HCT116 (cell line): ENCODE measurements at regions of chr1 and their contacts with region 1.

Region 1: GRCh38 chr1:20493839-20494608 is 8.0 kb upstream of the CAMK2N1 start:
- DNase-seq: peak; percentile 84
- ATAC-seq: peak; percentile 48
- H3K4me3 ChIP-seq: peak overlapping the region in 1 of 2 experiments; percentile 37; a peak in 1 of 4 replicates
- H3K27ac ChIP-seq: peak overlapping the region; percentile 94
- H3K4me1 ChIP-seq: peaks cover 30 to 57% of the 10 kb centered on the region in 2 experiments
- H3K27me3 ChIP-seq: no peaks in the 10 kb centered on the region
- CTCF ChIP-seq: peak in 2 of 3 experiments; percentile 98 to 99; a peak in 4 of 6 replicates
- POLR2A ChIP-seq: no peak
- RAD21 ChIP-seq: no peak

Region 2: DNA sequence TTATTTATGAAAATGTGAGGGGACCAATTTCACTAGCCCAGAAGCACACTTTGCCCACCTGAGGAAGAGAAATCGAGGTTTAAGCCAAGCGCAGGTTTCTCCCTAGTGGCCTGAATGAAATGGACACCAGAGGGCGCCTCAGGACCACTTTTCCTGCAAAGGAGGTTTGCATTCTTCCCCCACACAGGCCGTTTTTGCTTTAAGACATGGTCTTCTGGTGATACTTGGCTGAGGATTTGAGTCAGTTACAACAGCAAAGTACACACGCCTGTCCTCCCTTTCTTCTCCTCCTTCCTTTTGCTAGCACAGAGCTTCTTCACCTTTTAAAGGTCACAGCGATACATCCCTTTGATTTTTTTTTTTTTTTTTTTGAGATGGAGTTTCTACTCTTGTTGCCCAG is 576.0 kb before region 1 on chr1:
- CTCF ChIA-PET with region 1: interaction called, 4 read pairs
- POLR2A ChIA-PET with region 1: no interaction called
- RAD21 ChIA-PET with region 1: no interaction called
- intact Hi-C with region 1: loop called (anchors 2 kb)
- DNase-seq: peak; percentile 75
- ATAC-seq: peak; percentile 80
- H3K4me3 ChIP-seq: no peak overlapping the region
- H3K27ac ChIP-seq: no peak overlapping the region
- H3K4me1 ChIP-seq: peaks cover 0 to 13% of the 10 kb centered on the region in 2 experiments; a peak in 2 of 4 replicates
- H3K27me3 ChIP-seq: no peaks in the 10 kb centered on the region
- CTCF ChIP-seq: peak; percentile 91 to 93 (median 92)
- POLR2A ChIP-seq: no peak
- RAD21 ChIP-seq: peak; percentile 99

Region 3: GRCh38 chr1:20100632-20101355 is 393.2 kb before region 1 on chr1:
- CTCF ChIA-PET with region 1: interaction called, 4 read pairs
- POLR2A ChIA-PET with region 1: no interaction called
- RAD21 ChIA-PET with region 1: no interaction called
- intact Hi-C with region 1: loop called (anchors 1 kb)
- DNase-seq: peak; percentile 52
- ATAC-seq: peak; percentile 96
- H3K4me3 ChIP-seq: no peak overlapping the region
- H3K27ac ChIP-seq: no peak overlapping the region
- H3K4me1 ChIP-seq: peaks cover 0 to 1% of the 10 kb centered on the region in 2 experiments; a peak in 1 of 4 replicates
- H3K27me3 ChIP-seq: no peaks in the 10 kb centered on the region
- CTCF ChIP-seq: peak; percentile 81 to 88 (median 87)
- POLR2A ChIP-seq: no peak
- RAD21 ChIP-seq: peak; percentile 98

Region 4: DNA sequence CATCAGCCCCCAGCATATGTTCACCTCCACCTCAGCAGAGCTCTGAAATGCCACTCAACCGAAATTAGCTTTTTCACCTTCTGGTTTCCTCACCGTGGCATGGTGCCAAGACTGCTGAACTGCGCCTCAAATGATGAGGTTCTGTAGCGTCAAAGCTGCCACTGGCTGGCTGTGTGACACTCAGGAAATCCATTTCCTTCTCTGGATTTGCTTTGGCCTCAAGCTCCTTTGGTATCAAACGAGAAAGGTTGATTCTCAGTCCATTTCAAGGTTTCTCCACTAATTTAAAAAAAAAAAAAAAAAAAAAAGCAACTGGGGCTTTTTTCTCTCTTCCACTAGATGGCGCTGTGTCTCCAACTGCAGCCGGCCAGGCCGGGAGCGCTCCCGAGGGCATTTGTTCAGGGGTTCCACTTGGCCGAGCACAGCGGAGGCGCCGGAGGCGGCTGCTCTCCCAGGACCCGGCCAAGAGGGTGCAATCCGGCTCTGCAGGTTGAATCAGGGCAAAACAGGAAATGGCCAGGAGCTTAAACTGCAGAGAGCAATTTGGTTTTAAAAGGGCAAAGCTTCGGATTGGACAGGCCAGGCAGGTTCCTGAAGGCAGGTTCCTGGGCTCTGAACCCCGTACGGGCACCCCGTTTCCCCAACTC is 281.2 kb before region 1 on chr1:
- CTCF ChIA-PET with region 1: interaction called, 47 read pairs
- POLR2A ChIA-PET with region 1: interaction called, 12 read pairs
- RAD21 ChIA-PET with region 1: interaction called in 1 of 2 experiments, 3 read pairs
- intact Hi-C with region 1: loop called (anchors 1 kb)
- DNase-seq: peak; percentile 54
- ATAC-seq: peak; percentile 90
- H3K4me3 ChIP-seq: peak overlapping the region; percentile 2 to 24; a peak in 1 of 4 replicates
- H3K27ac ChIP-seq: no peak overlapping the region
- H3K4me1 ChIP-seq: peaks cover 9 to 28% of the 10 kb centered on the region in 2 experiments
- H3K27me3 ChIP-seq: no peaks in the 10 kb centered on the region
- CTCF ChIP-seq: peak; percentile 76 to 86 (median 81)
- POLR2A ChIP-seq: no peak
- RAD21 ChIP-seq: peak; percentile 86

Region 5: DNA sequence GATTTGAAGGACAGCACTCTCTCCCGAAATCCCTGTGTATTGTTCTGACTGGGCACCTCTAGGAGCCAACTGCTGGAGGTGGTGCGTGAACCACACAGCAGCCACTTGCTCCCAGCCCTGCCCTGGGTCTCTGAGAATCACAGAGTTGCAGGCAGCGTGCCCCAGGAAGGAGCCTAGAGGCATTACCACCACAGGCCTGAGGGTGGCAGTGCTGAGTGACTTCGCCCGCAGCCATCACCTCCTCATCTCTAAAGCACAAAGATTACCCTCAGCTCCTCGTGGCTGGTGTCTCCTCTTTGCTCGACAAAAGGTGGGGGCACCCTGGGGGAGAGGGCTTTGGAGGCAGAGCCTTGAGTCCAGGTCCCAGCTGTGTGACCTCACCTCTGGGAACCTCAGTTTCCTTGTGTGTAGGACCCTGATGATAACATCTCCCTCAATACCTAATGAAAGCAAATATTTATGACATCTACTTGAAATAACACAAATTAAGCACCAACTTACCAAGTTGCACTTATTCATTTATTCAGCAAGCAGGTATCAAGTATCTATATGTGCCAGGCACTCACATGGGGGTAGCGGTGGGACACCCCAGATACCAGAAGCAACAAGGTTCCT is 117.0 kb before region 1 on chr1:
- CTCF ChIA-PET with region 1: interaction called, 4 read pairs
- POLR2A ChIA-PET with region 1: no interaction called
- RAD21 ChIA-PET with region 1: no interaction called
- intact Hi-C with region 1: loop called (anchors 1 kb)
- DNase-seq: peak; percentile 21
- ATAC-seq: peak; percentile 94
- H3K4me3 ChIP-seq: no peak overlapping the region
- H3K27ac ChIP-seq: no peak overlapping the region
- H3K4me1 ChIP-seq: peaks cover 4 to 33% of the 10 kb centered on the region in 2 experiments; a peak in 3 of 4 replicates
- H3K27me3 ChIP-seq: no peaks in the 10 kb centered on the region
- CTCF ChIP-seq: peak; percentile 57 to 92 (median 81); a peak in 5 of 6 replicates
- POLR2A ChIP-seq: no peak
- RAD21 ChIP-seq: peak; percentile 68